Mucosa of descending colon (tissue), 3 donors: ENCODE measurements at regions of chr20 and their contacts with region 1.

Region 1: GRCh38 chr20:34579191-34579978 is 20.9 kb downstream of the MAP1LC3A start:
- DNase-seq: peak; percentile 77 to 85 (median 84)
- ATAC-seq: peak; percentile 92
- H3K4me3 ChIP-seq: no peak overlapping the region
- H3K4me1 ChIP-seq: peaks cover 29% of the 10 kb centered on the region
- CTCF ChIP-seq: peak; percentile 40

Region 2: GRCh38 chr20:34704177-34705007 is 125.0 kb after region 1 on chr20 and contains the start of gene TP53INP2:
- intact Hi-C with region 1: loop called in 1 of 2 experiments (anchors 5 kb)
- DNase-seq: peak; percentile 95 to 97 (median 96)
- ATAC-seq: peak; percentile 74
- H3K4me3 ChIP-seq: peak within 1 kb of the TSS; percentile 72
- H3K4me1 ChIP-seq: peaks cover 32% of the 10 kb centered on the region
- CTCF ChIP-seq: no peak
- total RNA-seq, gene TP53INP2: 65.9 to 155 (median 114) TPM

Region 3: DNA sequence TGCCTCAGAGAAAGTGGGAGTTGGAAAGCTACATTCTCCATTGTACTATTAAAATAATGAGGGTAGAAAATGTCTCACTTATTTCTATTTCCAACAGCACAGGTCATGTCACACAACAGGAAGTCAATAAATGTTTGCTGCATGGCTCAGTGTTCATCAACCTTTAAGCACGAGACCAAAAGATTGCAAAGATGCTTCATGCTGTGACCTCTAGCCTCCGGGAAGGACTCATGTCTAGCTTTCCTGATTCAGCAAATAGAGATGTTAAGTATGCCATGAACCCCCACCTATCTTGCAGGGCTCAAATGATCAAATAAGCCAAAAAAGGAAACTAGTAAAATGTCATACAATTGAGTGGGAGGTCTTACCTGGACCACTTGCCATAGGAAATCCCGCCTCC is 188.7 kb after region 1 on chr20:
- intact Hi-C with region 1: loop called in 1 of 2 experiments (anchors 5 kb)
- DNase-seq: no peak
- ATAC-seq: no peak
- H3K4me3 ChIP-seq: no peak overlapping the region
- H3K4me1 ChIP-seq: no peaks in the 10 kb centered on the region
- CTCF ChIP-seq: no peak